Psoas muscle (tissue), 8 donors: ENCODE measurements at regions of chr18 and their contacts with region 1.

Region 1: GRCh38 chr18:48893559-48894531 is 56.9 kb downstream of the SMAD7 start:
- DNase-seq: no peak
- ATAC-seq: no peak
- H3K4me3 ChIP-seq: no peak overlapping the region
- H3K27ac ChIP-seq: no peak overlapping the region
- H3K4me1 ChIP-seq: no peaks in the 10 kb centered on the region
- H3K27me3 ChIP-seq: no peaks in the 10 kb centered on the region
- CTCF ChIP-seq: no peak

Region 2: DNA sequence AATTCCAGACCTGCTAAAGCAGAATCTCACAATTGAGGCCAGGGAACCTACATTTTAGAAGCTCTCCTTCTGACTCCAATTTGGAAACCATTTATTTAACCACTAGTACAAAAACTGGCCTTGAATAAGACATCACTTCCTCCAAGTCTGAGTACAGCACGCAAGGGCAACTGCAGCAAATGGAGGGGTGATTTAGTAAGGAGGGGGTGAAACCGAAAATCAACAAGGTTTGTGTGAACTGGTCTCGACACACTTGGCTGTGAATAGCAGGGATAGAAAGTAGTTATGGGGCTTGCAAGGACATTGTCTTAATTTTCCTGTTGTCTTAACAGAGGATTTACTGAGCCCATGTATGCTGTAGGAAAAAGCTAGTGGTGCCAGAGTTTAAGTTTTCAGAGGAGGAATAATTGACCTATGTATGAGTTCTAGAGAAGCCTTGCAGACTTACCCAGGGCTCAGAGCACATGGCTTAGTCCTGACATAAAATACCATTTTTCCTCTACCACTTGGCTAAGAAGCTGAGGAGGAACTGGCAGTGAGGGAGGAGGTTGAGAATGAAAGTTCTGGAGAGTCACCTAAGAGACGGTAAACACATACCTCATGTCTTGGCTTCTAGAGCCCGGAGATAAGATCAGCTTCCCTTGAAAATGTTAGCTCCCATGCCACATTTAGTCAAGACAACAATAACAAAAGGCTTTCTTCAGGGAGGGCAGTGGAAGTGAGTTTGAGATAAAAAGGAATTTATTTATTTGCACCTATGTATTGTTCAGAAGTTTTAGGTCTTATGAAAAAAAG is 1078.2 kb before region 1 on chr18:
- intact Hi-C with region 1: no loop called
- DNase-seq: no peak
- ATAC-seq: no peak
- H3K4me3 ChIP-seq: no peak overlapping the region
- H3K27ac ChIP-seq: no peak overlapping the region
- H3K4me1 ChIP-seq: peaks cover 2% of the 10 kb centered on the region
- H3K27me3 ChIP-seq: no peaks in the 10 kb centered on the region
- CTCF ChIP-seq: no peak

Region 3: GRCh38 chr18:48915581-48916492 is 22.0 kb after region 1 on chr18:
- intact Hi-C with region 1: loop called in 1 of 2 experiments (anchors 2 kb)
- DNase-seq: no peak
- ATAC-seq: no peak
- H3K4me3 ChIP-seq: no peak overlapping the region
- H3K27ac ChIP-seq: no peak overlapping the region
- H3K4me1 ChIP-seq: no peaks in the 10 kb centered on the region
- H3K27me3 ChIP-seq: no peaks in the 10 kb centered on the region
- CTCF ChIP-seq: no peak

Region 4: DNA sequence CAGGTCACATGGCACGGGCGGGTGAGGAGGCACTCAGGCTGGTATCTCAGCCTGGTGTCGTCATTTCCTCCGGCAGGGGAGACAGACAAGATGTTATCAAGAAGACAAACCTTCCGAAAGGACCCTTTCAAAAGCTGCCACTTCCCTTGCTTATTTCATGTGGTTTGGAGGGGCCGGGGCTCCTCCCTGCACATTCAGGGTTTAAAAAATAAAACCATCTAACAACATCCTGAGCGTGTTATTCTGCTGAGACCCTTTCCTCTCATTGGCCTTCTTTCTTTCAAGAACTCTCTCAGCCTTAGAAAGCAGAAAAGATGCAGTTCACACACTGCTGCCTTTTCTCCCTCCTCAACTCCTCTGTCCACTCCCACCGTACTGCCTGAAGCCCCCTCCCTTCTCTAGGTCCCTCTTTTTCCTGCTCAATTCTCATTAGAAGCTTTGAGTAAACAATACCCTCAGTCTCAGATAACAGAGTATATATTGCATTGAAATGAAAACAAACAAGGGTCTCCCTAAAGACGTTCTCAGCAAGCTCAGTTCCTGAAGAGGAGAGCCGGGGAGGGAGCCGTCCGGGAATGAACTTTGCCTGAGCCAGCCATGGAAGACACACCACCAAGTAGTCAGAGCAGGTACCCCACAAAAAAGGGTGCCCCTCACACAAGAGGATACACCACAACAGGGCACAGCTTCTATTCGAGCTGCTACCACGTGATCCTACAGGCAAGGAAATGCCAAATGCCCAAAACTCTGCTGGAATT is 47.2 kb after region 1 on chr18:
- intact Hi-C with region 1: no loop called
- DNase-seq: no peak
- ATAC-seq: no peak
- H3K4me3 ChIP-seq: peak overlapping the region; percentile 15
- H3K27ac ChIP-seq: peak overlapping the region; percentile 58
- H3K4me1 ChIP-seq: peaks cover 90% of the 10 kb centered on the region
- H3K27me3 ChIP-seq: no peaks in the 10 kb centered on the region
- CTCF ChIP-seq: no peak

Region 5: DNA sequence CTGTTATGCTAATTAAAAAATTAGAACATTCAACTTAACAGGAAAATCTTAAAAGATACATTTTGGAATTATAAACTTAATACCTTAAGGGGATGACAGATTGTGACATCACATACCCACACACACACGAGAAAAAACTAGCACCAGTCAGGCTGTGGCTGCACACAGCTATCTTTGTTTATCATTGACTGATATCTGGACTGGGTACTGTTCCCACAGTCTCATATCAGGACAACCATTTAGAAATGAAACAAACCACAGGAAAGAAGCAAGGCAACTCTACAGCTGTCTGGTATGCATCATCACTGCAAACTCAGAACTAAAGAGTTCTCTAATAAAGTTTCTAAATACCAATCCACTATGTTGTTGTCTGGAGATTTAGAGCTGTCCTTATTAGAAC is 267.8 kb after region 1 on chr18:
- intact Hi-C with region 1: no loop called
- DNase-seq: no peak
- ATAC-seq: no peak
- H3K4me3 ChIP-seq: no peak overlapping the region
- H3K27ac ChIP-seq: no peak overlapping the region
- H3K4me1 ChIP-seq: no peaks in the 10 kb centered on the region
- H3K27me3 ChIP-seq: no peaks in the 10 kb centered on the region
- CTCF ChIP-seq: no peak